ENCODE measurements at regions of chr6 and their contacts with region 1.

Region 1: GRCh38 chr6:160030103-160030502 is 61.2 kb downstream of the IGF2R start:
- DNase-seq: peak; percentile 88 to 91 (median 89)
- ATAC-seq: peak; percentile 90 to 97 (median 92)
- H3K4me3 ChIP-seq: no peak overlapping the region
- H3K27ac ChIP-seq: peak overlapping the region in 11 of 12 donors; percentile 47 to 82 (median 73)
- H3K4me1 ChIP-seq: peaks cover 3 to 39% (median 17%) of the 10 kb centered on the region in 12 donors
- H3K27me3 ChIP-seq: no peaks in the 10 kb centered on the region
- CTCF ChIP-seq: peak in 3 of 12 donors; percentile 11 to 34 (median 19)
- POLR2A ChIP-seq: no peak

Region 2: GRCh38 chr6:159959165-159959975 is 70.7 kb before region 1 on chr6:
- intact Hi-C with region 1: no loop called
- DNase-seq: no peak
- ATAC-seq: peak in 3 of 4 donors; percentile 31 to 70 (median 39)
- H3K4me3 ChIP-seq: no peak overlapping the region
- H3K27ac ChIP-seq: peak overlapping the region in 11 of 12 donors; percentile 18 to 92 (median 66)
- H3K4me1 ChIP-seq: peaks cover 0 to 47% (median 9%) of the 10 kb centered on the region in 12 donors
- H3K27me3 ChIP-seq: no peaks in the 10 kb centered on the region
- CTCF ChIP-seq: no peak
- POLR2A ChIP-seq: no peak

Region 3: DNA sequence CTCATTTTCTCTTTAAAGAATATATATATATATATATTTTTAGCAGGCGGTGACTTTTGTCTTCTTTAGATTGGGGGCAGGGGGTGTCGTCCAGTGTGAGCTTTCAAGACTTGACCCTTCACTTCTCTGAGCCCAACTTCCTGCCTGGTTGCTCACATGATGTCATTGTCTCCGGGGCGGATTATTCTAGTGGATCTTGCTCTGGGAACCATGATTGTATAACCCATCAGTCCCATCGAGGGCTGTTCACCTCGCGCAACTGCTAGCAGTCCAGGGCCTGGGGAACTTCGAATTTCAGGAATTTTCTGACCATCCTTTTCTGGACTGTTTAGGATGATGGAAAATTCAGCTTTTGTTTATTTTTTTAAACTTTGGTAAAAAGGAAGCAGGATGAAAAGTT is 60.2 kb before region 1 on chr6:
- intact Hi-C with region 1: loop called in 7 of 10 experiments (anchors 5 to 10 kb)
- DNase-seq: peak in 4 of 5 donors; percentile 58 to 74 (median 62)
- ATAC-seq: peak; percentile 30 to 85 (median 60)
- H3K4me3 ChIP-seq: peak overlapping the region; percentile 76 to 99 (median 94)
- H3K27ac ChIP-seq: peak overlapping the region; percentile 62 to 96 (median 92)
- H3K4me1 ChIP-seq: peaks cover 0 to 73% (median 41%) of the 10 kb centered on the region in 12 donors
- H3K27me3 ChIP-seq: no peaks in the 10 kb centered on the region
- CTCF ChIP-seq: no peak
- POLR2A ChIP-seq: no peak

Region 4: DNA sequence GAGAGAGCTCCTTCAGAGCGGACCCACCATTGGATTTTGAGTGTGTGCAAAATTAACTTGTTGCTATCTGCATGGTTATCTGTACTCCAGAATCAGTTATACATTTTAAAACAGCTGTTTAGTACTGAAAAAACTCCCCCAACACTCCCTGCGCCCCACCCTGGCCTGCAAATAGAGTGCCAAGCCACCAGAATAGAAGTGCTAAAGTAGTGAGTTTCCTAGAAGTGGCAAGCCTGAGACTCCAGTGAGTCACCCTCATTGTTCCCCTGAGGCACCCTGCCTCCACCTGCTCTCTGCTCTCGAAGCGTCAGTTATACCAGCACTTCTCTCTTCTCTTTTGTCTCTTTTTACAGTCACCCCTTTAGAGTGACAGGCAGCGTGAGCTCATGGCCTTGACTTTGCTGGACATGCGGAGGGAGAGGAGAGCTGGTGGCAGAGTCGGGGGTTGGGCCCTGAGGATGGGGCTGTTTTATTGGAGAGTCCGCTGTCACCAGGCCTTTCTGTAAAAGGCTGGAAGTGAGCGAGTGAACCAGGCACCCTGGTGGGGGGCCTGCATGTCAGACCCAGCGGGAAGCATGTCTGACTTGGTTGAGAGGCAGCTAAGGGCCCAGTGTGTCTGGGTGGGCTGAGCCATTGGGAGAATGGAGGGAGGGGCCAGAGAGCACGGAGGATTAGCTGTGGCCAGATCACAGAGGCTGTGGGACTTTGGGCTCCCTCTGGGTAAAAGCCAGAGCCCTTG is 50.8 kb before region 1 on chr6:
- intact Hi-C with region 1: loop called in 8 of 10 experiments (anchors 5 to 10 kb)
- DNase-seq: peak in 2 of 5 donors; percentile 47 to 70
- ATAC-seq: peak in 3 of 4 donors; percentile 39 to 71 (median 63)
- H3K4me3 ChIP-seq: no peak overlapping the region
- H3K27ac ChIP-seq: peak overlapping the region in 11 of 12 donors; percentile 59 to 86 (median 77)
- H3K4me1 ChIP-seq: peaks cover 21 to 98% (median 77%) of the 10 kb centered on the region in 12 donors
- H3K27me3 ChIP-seq: no peaks in the 10 kb centered on the region
- CTCF ChIP-seq: no peak
- POLR2A ChIP-seq: no peak